Activated T-helper 1 cell treated with anti-CD3 and anti-CD28 coated beads, Interleukin-12 subunit alpha, Interleukin-12 subunit beta, Interleukin-2, Interleukin-4 antibody, amounts not matched to agents 30 ng/mL and 10 ng/mL and 1 ng/mL, durations not matched to agents 14 hours and 24 hours and 36 hours (primary cell): ENCODE measurements at regions of chr11 and their contacts with region 1.

Region 1: GRCh38 chr11:86202013-86202336 is 42.6 kb upstream of the EED start:
- DNase-seq: no peak
- H3K4me3 Mint-ChIP-seq: no peak overlapping the region
- H3K27ac Mint-ChIP-seq: no peak overlapping the region
- H3K4me1 Mint-ChIP-seq: peaks cover 21% of the 10 kb centered on the region
- H3K27me3 Mint-ChIP-seq: no peaks in the 10 kb centered on the region

Region 2: DNA sequence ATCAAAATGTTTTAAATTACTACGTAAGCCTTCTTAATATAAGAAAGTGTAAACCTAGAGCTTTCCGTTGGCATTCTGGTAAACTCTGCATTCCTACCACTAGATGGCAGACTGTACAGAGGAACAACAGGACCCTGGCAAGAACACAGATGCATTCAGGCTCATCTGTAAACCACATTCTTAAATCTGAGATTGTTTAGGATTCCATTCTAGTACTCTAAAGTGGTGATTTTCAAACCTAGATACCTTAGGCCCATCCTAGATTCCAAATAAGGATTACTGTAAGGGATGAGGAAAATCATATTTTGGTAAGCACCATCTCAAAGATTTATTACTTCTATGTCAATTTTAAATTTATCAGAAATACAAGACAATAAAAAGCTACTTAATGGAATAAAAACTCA is 160.0 kb before region 1 on chr11:
- intact Hi-C with region 1: loop called (anchors 1 kb)
- DNase-seq: peak; percentile 48
- H3K4me3 Mint-ChIP-seq: peak overlapping the region; percentile 43
- H3K27ac Mint-ChIP-seq: peak overlapping the region; percentile 71
- H3K4me1 Mint-ChIP-seq: peaks cover 63% of the 10 kb centered on the region
- H3K27me3 Mint-ChIP-seq: no peaks in the 10 kb centered on the region

Region 3: GRCh38 chr11:86116386-86116726 is 85.6 kb before region 1 on chr11:
- intact Hi-C with region 1: loop called (anchors 5 kb)
- DNase-seq: no peak
- H3K4me3 Mint-ChIP-seq: peak overlapping the region; percentile 9
- H3K27ac Mint-ChIP-seq: peak overlapping the region; percentile 70
- H3K4me1 Mint-ChIP-seq: peaks cover 30% of the 10 kb centered on the region
- H3K27me3 Mint-ChIP-seq: no peaks in the 10 kb centered on the region

Region 4: DNA sequence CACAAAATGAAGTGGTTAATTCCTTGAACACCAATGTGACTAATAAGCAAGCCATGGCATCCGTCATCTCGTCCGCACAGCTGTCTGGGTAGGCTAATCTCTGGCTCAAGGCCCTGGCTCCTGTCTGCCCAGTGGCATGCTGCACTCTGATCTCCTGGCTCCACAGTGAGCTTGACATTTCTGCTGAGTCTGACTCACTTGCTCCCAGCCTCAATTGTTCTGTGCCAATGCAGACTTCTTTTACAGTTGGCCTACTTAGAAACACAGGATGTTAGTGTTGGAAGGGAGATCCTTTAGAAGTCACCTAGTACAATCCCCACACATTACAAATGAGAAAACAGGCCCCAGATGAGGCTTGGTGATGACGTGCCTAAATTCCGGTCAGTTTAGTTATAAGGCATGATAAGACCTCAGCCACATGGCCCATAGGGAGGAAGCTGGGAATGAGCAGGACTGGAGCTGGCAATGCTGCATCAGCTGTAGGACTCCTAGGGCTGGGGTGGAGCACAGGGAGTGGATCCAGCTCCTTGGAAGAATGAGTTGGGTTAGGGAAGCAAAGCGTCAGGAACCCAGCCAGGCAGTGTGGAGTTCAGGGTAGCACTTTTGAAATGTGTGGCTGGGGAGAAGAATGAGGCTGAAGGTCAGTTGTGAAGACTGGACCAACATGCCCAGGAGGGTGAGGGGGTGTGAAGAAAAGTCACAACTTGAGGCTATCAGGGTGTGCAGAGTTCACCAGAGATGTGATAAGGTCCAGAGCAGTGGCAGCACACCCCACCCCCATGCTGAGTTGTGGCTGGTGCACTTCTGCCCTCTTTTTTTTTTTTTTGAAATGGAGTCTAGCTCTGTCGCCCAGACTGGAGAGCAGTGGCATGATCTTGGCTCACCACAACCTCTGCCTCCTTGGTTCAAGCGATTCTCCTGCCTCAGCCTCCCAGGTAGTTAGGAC is 27.6 kb before region 1 on chr11:
- intact Hi-C with region 1: loop called (anchors 1 kb)
- DNase-seq: no peak
- H3K4me3 Mint-ChIP-seq: no peak overlapping the region
- H3K27ac Mint-ChIP-seq: no peak overlapping the region
- H3K4me1 Mint-ChIP-seq: peaks cover 33% of the 10 kb centered on the region
- H3K27me3 Mint-ChIP-seq: no peaks in the 10 kb centered on the region

Region 5: GRCh38 chr11:86230921-86231430 is 29.0 kb after region 1 on chr11:
- intact Hi-C with region 1: loop called (anchors 1 kb)
- DNase-seq: no peak
- H3K4me3 Mint-ChIP-seq: no peak overlapping the region
- H3K27ac Mint-ChIP-seq: peak overlapping the region; percentile 47
- H3K4me1 Mint-ChIP-seq: peaks cover 68% of the 10 kb centered on the region
- H3K27me3 Mint-ChIP-seq: no peaks in the 10 kb centered on the region